ENCODE measurements at regions of chrX and their contacts with region 1.

Region 1: DNA sequence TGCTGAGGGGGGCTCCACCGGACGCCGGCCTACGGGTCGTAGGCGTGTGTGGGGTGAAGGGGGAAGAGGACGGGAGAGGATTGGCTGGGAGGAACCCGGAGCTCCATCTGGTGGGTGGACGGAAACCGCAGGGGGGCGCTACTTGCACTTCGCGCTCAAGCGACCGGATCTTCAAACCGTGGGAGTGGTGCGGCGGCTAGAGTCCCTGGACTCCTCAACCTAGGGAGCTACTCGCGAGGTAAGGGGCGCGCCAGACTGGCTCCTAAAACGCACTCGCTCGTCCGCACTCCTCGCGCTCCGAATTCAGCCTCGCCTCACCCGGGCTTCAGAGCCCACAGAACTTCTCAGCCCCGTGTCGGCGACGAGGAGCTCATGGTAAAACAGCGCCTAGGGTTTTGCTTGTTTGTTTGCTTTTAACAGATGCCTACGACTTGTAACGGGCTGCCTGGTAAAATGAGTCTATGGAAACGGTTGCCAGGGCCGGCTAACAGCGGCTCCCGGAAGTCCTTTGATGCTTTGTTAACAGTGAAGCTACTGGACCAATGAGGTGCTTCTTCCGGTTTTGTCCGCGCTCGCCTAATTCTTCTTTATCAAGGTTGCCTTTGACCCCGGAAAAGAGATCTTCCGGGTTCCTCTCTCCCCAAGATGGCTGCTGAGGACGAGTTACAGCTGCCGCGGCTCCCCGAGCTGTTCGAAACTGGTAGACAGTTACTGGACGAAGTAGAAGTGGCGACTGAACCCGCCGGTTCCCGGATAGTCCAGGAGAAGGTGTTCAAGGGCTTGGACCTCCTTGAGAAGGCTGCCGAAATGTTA is at the start of gene IGBP1:
- DNase-seq: peak; percentile 16
- H3K4me3 ChIP-seq: peak within 1 kb of the TSS; percentile 77
- CTCF ChIP-seq: peak; percentile 73

Region 2: DNA sequence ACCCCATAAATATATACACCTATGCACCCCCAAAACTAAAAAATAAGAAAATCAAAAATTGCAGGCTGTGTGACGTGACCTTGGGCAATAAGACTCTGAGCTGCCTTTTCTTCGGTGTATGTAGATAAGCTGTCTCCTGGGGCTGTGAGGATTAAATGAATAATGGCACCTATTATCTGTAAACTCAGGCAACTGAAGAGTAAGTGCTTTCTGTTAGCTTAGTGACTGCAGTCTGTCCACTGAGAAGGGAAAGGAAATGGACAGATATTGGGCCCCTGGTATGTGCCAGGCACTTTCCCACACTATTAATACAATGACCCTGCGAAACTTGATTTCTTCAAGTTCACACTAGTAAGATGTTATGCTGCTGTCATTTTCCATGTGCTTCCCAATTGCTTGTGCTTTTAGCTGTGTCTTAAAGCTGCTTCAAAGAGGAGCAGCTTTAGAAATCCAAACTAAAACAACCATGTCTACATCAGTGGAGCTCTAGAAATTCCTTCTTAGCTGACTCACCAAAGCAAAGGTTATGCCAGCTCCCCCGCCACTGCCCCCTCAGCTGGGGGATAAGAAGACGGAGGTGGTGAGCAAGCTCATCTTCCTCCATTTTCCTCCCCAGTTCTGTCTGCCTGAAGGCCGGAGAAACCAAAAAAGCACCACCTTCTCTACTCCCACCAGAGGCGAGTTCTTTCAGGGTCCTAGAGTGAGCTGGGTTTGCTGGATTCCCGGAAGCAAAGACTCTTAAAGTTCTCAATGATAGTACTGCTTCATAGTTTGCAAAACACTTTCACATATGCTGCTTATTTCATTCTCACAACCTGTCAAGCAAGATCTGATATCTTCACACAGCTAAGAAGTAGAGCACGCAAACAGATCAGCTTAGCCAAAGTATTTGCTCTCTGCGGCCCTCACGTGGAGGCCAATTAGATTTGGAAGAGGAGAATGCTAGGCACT is 35.0 kb after region 1 on chrX:
- CTCF ChIA-PET with region 1: interaction called, 18 read pairs
- POLR2A ChIA-PET with region 1: interaction called, 4 read pairs
- DNase-seq: peak; percentile 21
- H3K4me3 ChIP-seq: no peak overlapping the region
- CTCF ChIP-seq: no peak

Region 3: DNA sequence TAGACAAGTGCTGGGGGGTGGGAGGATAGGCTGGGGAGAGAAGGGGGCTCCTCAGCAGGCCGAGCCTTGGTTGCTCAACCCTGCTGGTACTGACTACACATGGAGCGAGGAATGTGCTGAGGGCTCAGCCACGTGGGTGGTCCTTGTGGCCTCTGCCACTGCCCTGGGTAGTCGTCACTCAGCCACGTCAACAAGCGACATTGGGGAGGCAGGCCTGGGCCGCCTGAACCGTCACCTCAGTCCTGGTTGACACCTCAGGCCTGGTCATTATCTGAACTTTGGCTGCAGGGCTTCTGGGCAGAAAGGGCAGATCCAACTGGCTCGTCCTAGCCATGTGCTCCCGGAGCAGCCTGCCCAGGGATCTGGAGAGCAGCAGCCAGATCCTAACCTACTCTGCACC is 226.9 kb after region 1 on chrX:
- CTCF ChIA-PET with region 1: no interaction called
- POLR2A ChIA-PET with region 1: no interaction called
- DNase-seq: no peak
- H3K4me3 ChIP-seq: no peak overlapping the region
- CTCF ChIP-seq: no peak

Measured in AG04449 (cell line).